ENCODE measurements at regions of chr17 and their contacts with region 1.

Region 1: GRCh38 chr17:60664022-60664421 is 13.6 kb upstream of the BCAS3 start:
- DNase-seq: no peak
- H3K4me3 Mint-ChIP-seq: no peak overlapping the region
- H3K27ac Mint-ChIP-seq: no peak overlapping the region
- H3K4me1 Mint-ChIP-seq: no peaks in the 10 kb centered on the region
- H3K27me3 Mint-ChIP-seq: no peaks in the 10 kb centered on the region
- CTCF ChIP-seq: no peak

Region 2: GRCh38 chr17:60630352-60630751 is 33.7 kb before region 1 on chr17:
- CTCF ChIA-PET with region 1: no interaction called
- POLR2A ChIA-PET with region 1: no interaction called
- intact Hi-C with region 1: no loop called
- DNase-seq: no peak
- H3K4me3 Mint-ChIP-seq: no peak overlapping the region
- H3K27ac Mint-ChIP-seq: no peak overlapping the region
- H3K4me1 Mint-ChIP-seq: no peaks in the 10 kb centered on the region
- H3K27me3 Mint-ChIP-seq: no peaks in the 10 kb centered on the region
- CTCF ChIP-seq: no peak

Region 3: DNA sequence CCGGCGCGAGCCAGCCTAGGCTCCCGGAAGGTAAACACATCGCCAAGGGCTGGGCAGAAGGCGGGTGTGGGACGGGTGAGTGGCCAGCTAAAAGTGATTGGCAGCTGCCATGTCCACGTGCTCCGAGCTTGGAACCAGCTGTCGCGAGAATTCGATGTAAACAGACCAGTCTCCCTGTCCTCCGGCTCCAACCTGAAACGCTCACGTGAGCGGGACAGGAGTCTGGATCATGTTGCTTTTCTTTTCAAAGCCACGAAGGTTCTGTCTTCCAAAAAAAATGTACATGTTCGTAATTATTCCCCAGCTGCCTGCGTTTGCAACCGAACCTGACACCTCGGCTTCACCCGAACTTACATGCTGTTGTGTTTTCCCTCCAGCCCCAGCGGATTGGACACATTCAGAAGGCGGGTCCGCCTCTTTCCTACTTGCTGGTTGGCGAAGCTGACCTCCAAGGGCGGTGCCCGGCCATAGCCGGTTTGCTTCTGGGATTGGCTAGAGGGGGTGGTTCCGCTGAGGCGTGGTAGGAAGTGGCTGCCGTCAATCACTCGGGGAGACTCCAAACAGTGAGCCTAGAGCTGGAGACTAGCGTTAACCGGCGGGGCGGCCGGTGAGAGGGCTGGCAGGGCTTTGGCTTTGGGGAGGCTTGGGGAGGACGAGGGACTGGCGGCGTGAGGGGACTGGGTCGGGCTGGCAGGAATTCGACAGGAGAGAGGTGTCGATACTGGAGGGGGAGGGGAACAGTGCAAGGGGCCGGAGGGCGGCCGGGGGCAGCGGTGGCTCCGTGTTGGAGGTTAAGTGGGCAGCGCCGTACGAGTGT is 13.5 kb after region 1 on chr17 and contains the start of gene BCAS3:
- CTCF ChIA-PET with region 1: no interaction called
- POLR2A ChIA-PET with region 1: interaction called, 12 read pairs
- intact Hi-C with region 1: no loop called
- DNase-seq: peak; percentile 99
- H3K4me3 Mint-ChIP-seq: peak within 1 kb of the TSS; percentile 98
- H3K27ac Mint-ChIP-seq: peak within 1 kb of the TSS; percentile 98
- H3K4me1 Mint-ChIP-seq: no peaks in the 10 kb centered on the region
- H3K27me3 Mint-ChIP-seq: no peaks in the 10 kb centered on the region
- CTCF ChIP-seq: no peak
- total RNA-seq, gene BCAS3: 14.6 and 19.6 TPM in 2 replicates